A549 (cell line): ENCODE measurements at regions of chr17 and their contacts with region 1.

Region 1: DNA sequence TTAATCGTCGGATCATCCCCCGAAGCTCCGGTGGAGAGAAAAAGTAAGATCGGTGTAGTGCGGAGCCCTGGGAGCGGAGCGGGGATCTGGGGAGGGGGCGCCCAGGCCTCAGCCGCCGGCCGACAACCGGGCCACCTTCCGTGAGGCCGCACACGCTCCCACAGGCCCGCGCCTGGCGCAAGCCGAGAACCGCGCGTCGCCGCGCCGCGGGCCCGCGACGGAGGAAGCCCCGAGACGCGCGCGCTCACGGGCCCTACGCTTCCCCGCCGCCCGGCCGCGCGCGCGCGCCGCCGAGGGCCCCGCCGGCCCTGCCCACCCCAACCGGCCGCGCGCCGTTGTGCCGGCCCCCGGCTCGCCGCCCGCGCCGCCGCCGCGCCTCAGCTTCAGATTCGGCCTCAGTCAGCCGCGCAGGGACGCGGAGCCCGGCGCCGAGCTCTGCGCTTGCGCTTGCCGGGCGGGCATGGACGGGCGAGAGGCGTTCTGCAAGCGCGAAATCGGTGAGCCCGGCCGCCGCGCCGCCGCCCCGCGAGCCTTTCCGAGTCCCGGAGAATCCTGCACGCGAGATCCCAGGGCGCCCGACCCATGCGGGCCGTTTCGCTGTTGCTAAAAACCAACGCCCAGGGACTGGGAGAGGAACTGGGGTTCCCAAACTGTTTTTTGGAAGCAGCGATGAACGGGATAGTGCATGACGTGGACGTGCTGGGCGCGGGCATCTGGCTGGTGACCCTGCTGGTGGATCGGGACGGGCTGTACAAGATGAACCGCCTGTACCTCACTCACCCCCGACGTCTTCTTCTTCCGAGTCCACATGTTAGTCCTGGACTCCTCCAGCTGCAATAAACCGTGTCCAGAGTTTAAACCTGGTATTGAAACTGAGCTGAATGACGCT is 28.0 kb upstream of the LRRC37A start:
- DNase-seq: peak; percentile 94 to 98
- ATAC-seq: peak; percentile 88 to 93
- H3K4me3 ChIP-seq: peak overlapping the region; percentile 58
- H3K27ac ChIP-seq: peak overlapping the region; percentile 87 to 88
- H3K4me1 ChIP-seq: peaks cover 20% of the 10 kb centered on the region; the same call in 2 of the 3 replicates
- CTCF ChIP-seq: peak; percentile 6; the same call in 1 of the 3 replicates
- EP300 ChIP-seq: no peak
- POLR2A ChIP-seq: peak; percentile 80
- RAD21 ChIP-seq: peak in 1 of 2 experiments; percentile 34; a peak in 1 of 5 replicates

Region 2: DNA sequence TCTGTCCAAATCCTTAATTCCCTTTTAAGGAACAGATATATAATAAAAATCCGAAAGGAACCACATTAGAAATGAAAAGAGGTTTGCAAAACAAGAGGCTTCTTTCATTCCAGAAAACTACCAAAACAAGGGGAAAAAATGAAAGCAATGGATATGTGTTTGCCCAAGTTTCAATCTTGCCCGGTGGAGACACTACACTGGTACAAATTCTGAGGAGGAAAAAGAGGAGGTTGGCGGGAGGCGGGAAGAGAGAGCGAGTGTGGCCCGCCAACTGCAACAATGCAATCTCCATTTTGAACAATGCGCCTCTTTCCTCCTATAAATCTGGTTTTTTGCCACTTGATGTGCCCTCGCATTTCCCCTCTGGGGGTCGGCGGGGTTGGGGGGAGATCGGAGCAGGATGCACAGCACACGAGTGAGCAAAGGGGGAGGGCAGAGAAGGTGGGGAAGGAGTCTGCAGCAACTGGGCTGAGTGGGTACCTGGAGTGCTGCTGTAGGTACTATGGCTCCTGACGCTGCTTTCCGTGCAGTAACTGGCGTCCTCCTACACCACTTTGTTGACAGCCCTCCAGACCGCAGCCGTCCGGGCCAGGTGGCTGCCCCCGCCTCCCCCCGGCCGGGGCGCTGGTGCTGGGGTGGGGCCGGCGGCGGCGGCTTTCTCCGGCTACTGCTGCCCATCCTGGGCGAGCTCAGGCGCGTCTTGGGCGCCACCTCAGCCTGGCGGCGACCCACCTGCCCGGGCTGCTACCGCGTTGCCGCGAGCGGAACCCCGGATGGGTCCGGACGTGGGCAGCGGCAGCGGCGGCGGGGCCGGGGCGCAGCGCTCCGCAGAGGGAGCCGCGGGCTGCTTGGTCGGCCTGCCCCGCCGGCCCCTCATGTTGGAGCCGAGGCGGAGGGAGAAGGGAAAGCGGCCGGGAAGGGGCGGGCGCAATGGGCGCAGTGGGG is 682.5 kb before region 1 on chr17:
- CTCF ChIA-PET with region 1: interaction called, 10 read pairs
- POLR2A ChIA-PET with region 1: interaction called, 5 read pairs
- DNase-seq: peak; percentile 80 to 84
- ATAC-seq: peak; percentile 60 to 69
- H3K4me3 ChIP-seq: peak overlapping the region; percentile 55
- H3K27ac ChIP-seq: peak overlapping the region; percentile 79 to 84
- H3K4me1 ChIP-seq: peaks cover 6% of the 10 kb centered on the region
- CTCF ChIP-seq: no peak
- EP300 ChIP-seq: no peak
- POLR2A ChIP-seq: peak; percentile 47
- RAD21 ChIP-seq: no peak; a peak in 2 of 5 replicates